Caco-2 (cell line): ENCODE measurements at regions of chr22 and their contacts with region 1.

Region 1: GRCh38 chr22:30289134-30289979 is at the start of gene CASTOR1:
- DNase-seq: peak; percentile 98
- H3K4me3 ChIP-seq: peak within 1 kb of the TSS; percentile 80
- H3K4me3 Mint-ChIP-seq: peak within 1 kb of the TSS; percentile 81
- H3K27ac Mint-ChIP-seq: peak within 1 kb of the TSS; percentile 77
- H3K4me1 ChIP-seq: peaks cover 4% of the 10 kb centered on the region
- H3K4me1 Mint-ChIP-seq: peaks cover 11% of the 10 kb centered on the region
- H3K27me3 ChIP-seq: no peaks in the 10 kb centered on the region
- H3K27me3 Mint-ChIP-seq: no peaks in the 10 kb centered on the region
- CTCF ChIP-seq: no peak
- total RNA-seq, gene CASTOR1: 6.3 and 7.4 TPM in 2 replicates

Region 2: DNA sequence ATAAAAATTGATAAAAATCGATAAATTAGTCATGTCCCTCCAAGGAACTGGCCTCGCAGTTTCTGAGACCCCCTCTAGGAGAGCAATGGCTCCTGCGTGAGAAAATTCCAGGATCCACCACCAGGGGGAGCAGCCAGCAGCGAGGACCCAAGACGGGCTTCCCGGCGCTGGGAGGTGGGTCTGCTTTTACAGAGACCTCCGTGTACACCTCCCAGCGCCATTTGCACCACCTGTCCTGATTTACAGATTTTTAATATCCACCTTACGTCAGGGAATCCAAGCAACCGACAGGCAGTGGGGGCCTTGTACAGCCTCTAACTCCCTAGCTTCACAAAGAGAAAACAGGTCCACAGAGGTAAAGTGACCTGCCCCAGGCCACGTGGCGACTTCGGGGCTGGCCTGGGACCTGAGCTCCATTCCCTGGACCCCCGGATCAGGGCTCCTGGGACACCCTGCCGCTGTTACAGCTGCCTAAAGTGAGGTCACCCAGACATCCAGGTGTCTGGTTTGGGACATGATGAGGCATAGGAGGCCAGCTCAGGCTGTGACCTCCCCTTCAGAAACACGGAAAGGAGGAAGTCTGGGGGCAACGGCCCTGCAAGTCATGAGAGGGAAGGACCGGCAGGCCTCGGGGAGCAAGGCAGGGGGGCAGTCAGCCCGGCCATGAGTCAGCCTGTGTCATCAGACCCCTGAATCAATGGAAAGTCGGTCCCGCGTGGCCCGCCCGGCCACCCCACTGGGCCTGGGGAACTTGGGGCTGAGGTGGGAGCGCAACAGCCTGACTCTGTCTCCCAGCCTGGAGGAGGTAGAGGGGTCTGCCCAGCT is 26.2 kb before region 1 on chr22:
- CTCF ChIA-PET with region 1: interaction called, 12 read pairs
- POLR2A ChIA-PET with region 1: no interaction called
- intact Hi-C with region 1: loop called (anchors 1 kb)
- DNase-seq: peak; percentile 80 to 86
- H3K4me3 ChIP-seq: no peak overlapping the region
- H3K4me3 Mint-ChIP-seq: no peak overlapping the region
- H3K27ac Mint-ChIP-seq: no peak overlapping the region
- H3K4me1 ChIP-seq: peaks cover 13% of the 10 kb centered on the region
- H3K4me1 Mint-ChIP-seq: peaks cover 2% of the 10 kb centered on the region
- H3K27me3 ChIP-seq: no peaks in the 10 kb centered on the region
- H3K27me3 Mint-ChIP-seq: no peaks in the 10 kb centered on the region
- CTCF ChIP-seq: peak; percentile 95 to 98

Region 3: GRCh38 chr22:30326706-30327362 is 37.5 kb after region 1 on chr22 and contains the start of gene TBC1D10A:
- CTCF ChIA-PET with region 1: interaction called, 106 read pairs
- POLR2A ChIA-PET with region 1: interaction called, 14 read pairs
- intact Hi-C with region 1: loop called (anchors 1 kb)
- DNase-seq: peak; percentile 96
- H3K4me3 ChIP-seq: peak within 1 kb of the TSS; percentile 87
- H3K4me3 Mint-ChIP-seq: peak within 1 kb of the TSS; percentile 79
- H3K27ac Mint-ChIP-seq: peak within 1 kb of the TSS; percentile 90
- H3K4me1 ChIP-seq: peaks cover 27% of the 10 kb centered on the region
- H3K4me1 Mint-ChIP-seq: peaks cover 30% of the 10 kb centered on the region
- H3K27me3 ChIP-seq: no peaks in the 10 kb centered on the region
- H3K27me3 Mint-ChIP-seq: no peaks in the 10 kb centered on the region
- CTCF ChIP-seq: no peak
- total RNA-seq, gene TBC1D10A: 11.1 and 12.2 TPM in 2 replicates

Region 4: DNA sequence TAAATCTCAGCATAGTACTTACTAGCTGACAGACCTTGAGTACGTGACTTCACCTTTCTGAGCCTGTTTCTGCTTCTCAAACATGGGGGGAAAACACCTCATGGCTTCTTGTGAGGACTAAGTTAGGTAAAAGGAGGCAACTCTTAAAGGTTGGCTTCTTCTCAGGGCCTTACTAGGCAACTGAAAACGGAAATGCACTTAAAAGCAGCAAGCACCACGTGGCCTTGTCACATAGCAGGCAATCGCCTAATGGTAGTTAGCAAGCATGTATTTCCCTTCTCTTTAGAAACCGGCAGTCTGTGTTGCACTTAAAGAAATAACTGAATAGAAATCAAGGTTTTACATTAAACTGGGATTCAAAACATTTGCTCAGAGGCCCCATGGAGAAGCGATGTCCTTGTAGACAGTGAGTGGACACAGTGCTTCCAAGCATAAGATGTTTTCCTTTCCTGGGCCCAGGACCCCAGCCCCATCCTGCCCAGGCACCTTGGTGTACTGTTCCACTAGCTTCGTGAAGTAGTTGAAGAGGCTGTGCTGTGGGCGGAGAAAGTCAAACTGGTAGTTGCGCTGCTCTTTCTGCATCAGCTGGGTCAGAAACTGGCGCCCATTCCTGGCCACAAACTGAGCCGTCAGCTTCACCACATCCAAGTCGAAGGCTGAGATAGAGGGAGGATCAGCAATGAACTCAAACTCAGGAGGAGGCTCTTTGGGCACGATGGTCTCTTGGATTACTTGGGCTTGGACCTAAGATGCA is 55.3 kb after region 1 on chr22:
- CTCF ChIA-PET with region 1: no interaction called
- POLR2A ChIA-PET with region 1: no interaction called
- intact Hi-C with region 1: no loop called
- DNase-seq: no peak
- H3K4me3 ChIP-seq: no peak overlapping the region
- H3K4me3 Mint-ChIP-seq: no peak overlapping the region
- H3K27ac Mint-ChIP-seq: no peak overlapping the region
- H3K4me1 ChIP-seq: no peaks in the 10 kb centered on the region
- H3K4me1 Mint-ChIP-seq: no peaks in the 10 kb centered on the region
- H3K27me3 ChIP-seq: no peaks in the 10 kb centered on the region
- H3K27me3 Mint-ChIP-seq: no peaks in the 10 kb centered on the region
- CTCF ChIP-seq: no peak

Region 5: GRCh38 chr22:30386960-30387827 is 97.8 kb after region 1 on chr22 and contains the start of gene RNF215:
- CTCF ChIA-PET with region 1: interaction called, 51 read pairs
- POLR2A ChIA-PET with region 1: interaction called, 3 read pairs
- intact Hi-C with region 1: loop called (anchors 1 kb)
- DNase-seq: peak; percentile 69 to 90
- H3K4me3 ChIP-seq: peak within 1 kb of the TSS; percentile 64
- H3K4me3 Mint-ChIP-seq: peak within 1 kb of the TSS; percentile 67
- H3K27ac Mint-ChIP-seq: peak within 1 kb of the TSS; percentile 12
- H3K4me1 ChIP-seq: 0 out of 2 replicates have a peak, but pooled peaks cover 4% of the 10 kb centered on the region
- H3K4me1 Mint-ChIP-seq: no peaks in the 10 kb centered on the region
- H3K27me3 ChIP-seq: no peaks in the 10 kb centered on the region
- H3K27me3 Mint-ChIP-seq: no peaks in the 10 kb centered on the region
- CTCF ChIP-seq: peak; percentile 84 to 88
- total RNA-seq, gene RNF215: 12.8 and 14.2 TPM in 2 replicates

Region 6: GRCh38 chr22:30423982-30424963 is 134.9 kb after region 1 on chr22:
- CTCF ChIA-PET with region 1: interaction called, 15 read pairs
- POLR2A ChIA-PET with region 1: no interaction called
- intact Hi-C with region 1: no loop called
- DNase-seq: peak; percentile 98 to 99
- H3K4me3 ChIP-seq: peak overlapping the region; percentile 62
- H3K4me3 Mint-ChIP-seq: peak overlapping the region; percentile 85
- H3K27ac Mint-ChIP-seq: peak overlapping the region; percentile 82
- H3K4me1 ChIP-seq: peaks cover 39% of the 10 kb centered on the region
- H3K4me1 Mint-ChIP-seq: peaks cover 35% of the 10 kb centered on the region
- H3K27me3 ChIP-seq: no peaks in the 10 kb centered on the region
- H3K27me3 Mint-ChIP-seq: no peaks in the 10 kb centered on the region
- CTCF ChIP-seq: no peak